ENCODE measurements at regions of chrX and their contacts with region 1.

Region 1: DNA sequence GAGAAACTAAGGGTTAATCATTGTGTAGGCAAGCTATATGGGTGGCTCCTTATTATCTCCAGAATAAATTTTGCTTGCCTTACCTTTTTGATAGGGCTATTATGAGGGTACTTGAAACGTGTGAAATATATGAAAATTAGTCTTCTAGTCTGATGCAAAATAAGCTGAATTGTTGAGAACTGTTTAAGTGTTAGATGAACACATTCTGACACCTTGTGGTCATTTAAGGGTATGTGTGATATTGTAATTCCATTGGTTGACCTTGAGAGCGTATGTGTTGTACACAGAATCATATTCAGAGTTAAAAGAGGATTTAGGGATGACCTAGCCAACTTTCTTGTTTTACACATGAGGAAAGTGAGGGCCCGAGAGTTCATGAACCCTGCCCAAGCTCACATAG is 44.6 kb upstream of the LINC00632 start:
- DNase-seq: no peak
- H3K4me3 ChIP-seq: no peak overlapping the region
- H3K27ac ChIP-seq: no peak overlapping the region
- H3K4me1 ChIP-seq: no peaks in the 10 kb centered on the region
- H3K27me3 ChIP-seq: peaks cover 3% of the 10 kb centered on the region
- CTCF ChIP-seq: peak in 3 of 6 experiments; percentile 34 to 54 (median 52)
- POLR2A ChIP-seq: no peak

Region 2: DNA sequence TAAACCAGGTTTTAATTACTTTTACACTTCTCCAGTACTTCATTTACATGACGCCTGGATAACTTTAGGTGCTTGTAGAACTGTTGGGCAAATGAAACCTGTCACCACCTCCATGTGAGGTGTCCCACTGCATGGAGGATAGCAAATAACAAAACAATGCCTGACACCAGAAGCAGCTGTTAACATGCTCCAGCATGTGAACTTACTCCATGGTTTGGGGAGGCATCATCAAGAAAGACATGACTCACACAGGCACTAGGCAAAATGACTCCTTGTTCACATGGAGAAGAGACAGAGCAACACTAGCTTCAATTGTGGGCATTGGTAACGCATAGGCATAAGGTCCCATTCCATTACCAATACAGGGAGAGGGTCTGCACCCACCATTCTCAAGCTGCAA is 1332.5 kb before region 1 on chrX:
- intact Hi-C with region 1: no loop called
- DNase-seq: no peak
- H3K4me3 ChIP-seq: no peak overlapping the region
- H3K27ac ChIP-seq: no peak overlapping the region
- H3K4me1 ChIP-seq: no peaks in the 10 kb centered on the region
- H3K27me3 ChIP-seq: no peaks in the 10 kb centered on the region
- CTCF ChIP-seq: no peak
- POLR2A ChIP-seq: no peak

Region 3: DNA sequence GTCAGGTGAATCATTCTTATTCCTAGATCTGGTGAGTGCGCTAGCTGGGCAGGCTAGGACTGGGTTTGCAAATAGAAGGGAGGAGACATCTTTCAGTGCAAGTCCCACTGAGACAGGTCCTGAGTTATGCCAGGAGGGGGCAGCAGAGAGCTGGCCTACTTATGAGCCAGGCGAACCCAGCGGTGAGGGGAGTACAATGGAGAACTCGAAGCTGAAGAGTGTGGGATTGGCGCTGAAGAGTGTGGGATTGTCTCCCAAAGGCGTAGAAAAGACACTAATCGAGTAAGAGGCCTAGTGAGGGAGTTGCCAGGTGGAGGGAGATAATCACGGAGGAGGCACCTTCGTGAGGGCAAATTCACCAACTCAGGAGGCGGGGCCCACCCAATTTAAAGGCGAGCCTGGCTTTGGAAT is 607.9 kb before region 1 on chrX:
- intact Hi-C with region 1: loop called (anchors 10 kb)
- DNase-seq: peak; percentile 73 to 77
- H3K4me3 ChIP-seq: no peak overlapping the region
- H3K27ac ChIP-seq: no peak overlapping the region
- H3K4me1 ChIP-seq: no peaks in the 10 kb centered on the region
- H3K27me3 ChIP-seq: no peaks in the 10 kb centered on the region
- CTCF ChIP-seq: peak; percentile 53 to 75 (median 66)
- POLR2A ChIP-seq: no peak

Region 4: GRCh38 chrX:140141444-140142029 is 523.4 kb before region 1 on chrX:
- intact Hi-C with region 1: no loop called
- DNase-seq: peak; percentile 21 to 40
- H3K4me3 ChIP-seq: no peak overlapping the region
- H3K27ac ChIP-seq: no peak overlapping the region
- H3K4me1 ChIP-seq: no peaks in the 10 kb centered on the region
- H3K27me3 ChIP-seq: no peaks in the 10 kb centered on the region
- CTCF ChIP-seq: peak in 5 of 6 experiments; percentile 17 to 54 (median 49)
- POLR2A ChIP-seq: no peak

Region 5: GRCh38 chrX:140572724-140573123 is 92.2 kb before region 1 on chrX:
- intact Hi-C with region 1: loop called (anchors 5 kb)
- DNase-seq: peak; percentile 50 to 62
- H3K4me3 ChIP-seq: no peak overlapping the region
- H3K27ac ChIP-seq: no peak overlapping the region
- H3K4me1 ChIP-seq: no peaks in the 10 kb centered on the region
- H3K27me3 ChIP-seq: no peaks in the 10 kb centered on the region
- CTCF ChIP-seq: peak in 5 of 6 experiments; percentile 35 to 59 (median 56)
- POLR2A ChIP-seq: no peak